ENCODE measurements at regions of chr20 and their contacts with region 1.

Region 1: DNA sequence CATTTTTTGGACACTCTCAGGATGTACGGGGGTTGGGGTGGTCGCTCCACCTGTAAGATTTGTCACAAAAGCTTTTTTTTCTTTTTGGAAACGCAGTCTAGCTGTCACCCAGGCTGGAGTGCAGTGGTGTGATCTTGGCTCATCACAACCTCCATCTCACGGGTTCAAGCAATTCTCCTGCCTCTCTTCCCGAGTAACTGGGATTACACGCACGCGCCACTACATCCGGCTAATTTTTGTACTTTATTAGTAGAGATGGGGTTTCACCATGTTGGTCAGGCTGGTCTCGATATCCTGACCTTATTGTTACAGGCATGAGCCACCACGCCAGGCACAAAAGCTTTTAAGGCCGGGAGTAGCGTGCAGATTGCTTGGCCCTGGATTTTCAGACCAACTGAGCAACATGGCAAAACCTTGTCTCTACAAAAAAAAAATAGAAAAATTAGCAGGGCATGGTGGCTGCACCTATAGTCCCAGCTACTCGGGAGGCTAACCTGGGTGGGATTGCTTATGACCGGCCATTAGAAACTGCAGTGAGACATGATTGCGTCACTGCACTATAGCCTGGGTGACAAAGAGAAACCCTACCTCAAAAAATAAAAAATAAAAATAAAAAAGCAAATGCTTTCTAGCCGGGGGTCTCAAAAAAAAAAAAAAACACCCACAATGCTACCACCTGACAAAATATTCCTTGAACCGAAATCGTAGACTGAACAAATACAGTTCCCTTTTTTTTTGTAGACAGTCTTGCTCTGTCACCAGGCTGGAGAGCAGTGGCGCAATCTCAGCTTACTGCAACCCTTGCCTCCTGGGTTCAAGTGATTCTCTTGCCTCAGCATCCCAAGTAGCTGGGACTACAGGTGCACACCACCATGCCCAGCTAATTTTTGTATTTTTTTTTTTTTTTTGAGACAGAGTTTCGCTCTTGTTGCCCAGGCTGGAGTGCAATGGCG is 15.0 kb downstream of the RBM39 start:
- DNase-seq: no peak
- H3K4me3 ChIP-seq: no peak overlapping the region
- H3K4me3 Mint-ChIP-seq: peak overlapping the region in 1 of 8 donors; percentile 3
- H3K27ac ChIP-seq: no peak overlapping the region
- H3K27ac Mint-ChIP-seq: peak overlapping the region in 3 of 7 donors; percentile 31 to 72 (median 62)
- H3K4me1 ChIP-seq: peaks cover 42% of the 10 kb centered on the region
- H3K4me1 Mint-ChIP-seq: peaks cover 18 to 57% (median 40%) of the 10 kb centered on the region in 4 donors
- H3K27me3 ChIP-seq: no peaks in the 10 kb centered on the region
- H3K27me3 Mint-ChIP-seq: no peaks in the 10 kb centered on the region

Region 2: GRCh38 chr20:35680452-35681183 is 46.4 kb before region 1 on chr20:
- CTCF ChIA-PET with region 1: no interaction called
- POLR2A ChIA-PET with region 1: no interaction called
- intact Hi-C with region 1: no loop called
- DNase-seq: no peak
- H3K4me3 ChIP-seq: no peak overlapping the region
- H3K4me3 Mint-ChIP-seq: no peak overlapping the region
- H3K27ac ChIP-seq: no peak overlapping the region
- H3K27ac Mint-ChIP-seq: no peak overlapping the region
- H3K4me1 ChIP-seq: no peaks in the 10 kb centered on the region
- H3K4me1 Mint-ChIP-seq: peaks cover 0 to 2% (median 0%) of the 10 kb centered on the region in 4 donors
- H3K27me3 ChIP-seq: no peaks in the 10 kb centered on the region
- H3K27me3 Mint-ChIP-seq: no peaks in the 10 kb centered on the region

Region 3: GRCh38 chr20:35771689-35772562 is 44.9 kb after region 1 on chr20 and contains the start of gene PHF20:
- CTCF ChIA-PET with region 1: no interaction called
- POLR2A ChIA-PET with region 1: interaction called, 7 read pairs
- intact Hi-C with region 1: loop called (anchors 10 kb)
- DNase-seq: peak; percentile 99 to 100 (median 99)
- H3K4me3 ChIP-seq: peak within 1 kb of the TSS; percentile 49 to 79
- H3K4me3 Mint-ChIP-seq: peak within 1 kb of the TSS; percentile 87 to 93 (median 91)
- H3K27ac ChIP-seq: peak within 1 kb of the TSS; percentile 94
- H3K27ac Mint-ChIP-seq: peak within 1 kb of the TSS; percentile 96 to 100 (median 100)
- H3K4me1 ChIP-seq: peaks cover 89% of the 10 kb centered on the region
- H3K4me1 Mint-ChIP-seq: peaks cover 57 to 93% (median 72%) of the 10 kb centered on the region in 4 donors
- H3K27me3 ChIP-seq: no peaks in the 10 kb centered on the region
- H3K27me3 Mint-ChIP-seq: no peaks in the 10 kb centered on the region
- total RNA-seq, gene PHF20: 72.9 to 82.3 TPM

Measured in CD4-positive, alpha-beta memory T cell (primary cell).